Activated naive CD8-positive, alpha-beta T cell treated with anti-CD3 and anti-CD28 coated beads, Interleukin-2, amount 10 ng/mL, durations not matched to agents 7 days and 5 days (primary cell): ENCODE measurements at regions of chr3 and their contacts with region 1.

Region 1: DNA sequence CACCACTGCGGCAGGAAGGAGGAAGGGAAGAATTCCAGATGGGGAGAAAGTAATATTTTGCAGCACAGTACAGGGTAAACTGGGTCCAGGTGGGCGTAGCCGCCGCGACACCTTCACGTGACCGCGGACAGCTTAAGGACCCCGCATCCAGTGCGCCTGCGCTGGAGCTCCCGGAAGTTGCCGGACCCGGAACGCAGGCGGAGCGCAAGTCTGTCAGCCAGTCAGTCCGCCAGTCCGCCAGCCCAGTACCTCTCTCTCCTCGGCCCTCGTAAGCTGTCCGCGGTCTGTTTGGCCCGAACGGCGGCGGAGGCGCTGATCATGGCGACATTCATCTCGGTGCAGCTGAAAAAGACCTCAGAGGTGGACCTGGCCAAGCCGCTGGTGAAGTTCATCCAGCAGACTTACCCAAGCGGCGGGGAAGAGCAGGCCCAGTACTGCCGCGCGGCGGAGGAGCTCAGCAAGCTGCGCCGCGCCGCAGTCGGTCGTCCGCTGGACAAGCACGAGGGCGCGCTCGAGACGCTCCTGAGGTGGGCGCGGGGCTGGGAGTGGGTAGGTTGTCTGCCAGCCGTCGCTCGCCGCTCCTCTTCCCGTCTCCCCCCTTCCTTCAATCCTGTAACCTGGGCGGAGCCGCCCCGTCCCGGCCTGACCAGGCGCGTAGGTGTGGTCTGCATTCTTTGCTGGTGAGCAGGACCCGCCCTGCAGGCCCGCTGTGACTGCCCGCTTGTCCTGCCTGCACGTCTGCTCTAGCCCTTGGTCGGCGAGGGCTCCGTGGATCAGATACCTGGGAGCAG is at the start of gene PDCD6IP:
- DNase-seq: peak; percentile 92
- ATAC-seq: peak; percentile 84
- H3K4me3 Mint-ChIP-seq: peak within 1 kb of the TSS; percentile 93
- H3K27ac Mint-ChIP-seq: peak within 1 kb of the TSS; percentile 91
- H3K4me1 Mint-ChIP-seq: peaks cover 35% of the 10 kb centered on the region
- H3K27me3 Mint-ChIP-seq: peaks cover 2% of the 10 kb centered on the region
- total RNA-seq, gene PDCD6IP: 180 to 196 TPM

Region 2: DNA sequence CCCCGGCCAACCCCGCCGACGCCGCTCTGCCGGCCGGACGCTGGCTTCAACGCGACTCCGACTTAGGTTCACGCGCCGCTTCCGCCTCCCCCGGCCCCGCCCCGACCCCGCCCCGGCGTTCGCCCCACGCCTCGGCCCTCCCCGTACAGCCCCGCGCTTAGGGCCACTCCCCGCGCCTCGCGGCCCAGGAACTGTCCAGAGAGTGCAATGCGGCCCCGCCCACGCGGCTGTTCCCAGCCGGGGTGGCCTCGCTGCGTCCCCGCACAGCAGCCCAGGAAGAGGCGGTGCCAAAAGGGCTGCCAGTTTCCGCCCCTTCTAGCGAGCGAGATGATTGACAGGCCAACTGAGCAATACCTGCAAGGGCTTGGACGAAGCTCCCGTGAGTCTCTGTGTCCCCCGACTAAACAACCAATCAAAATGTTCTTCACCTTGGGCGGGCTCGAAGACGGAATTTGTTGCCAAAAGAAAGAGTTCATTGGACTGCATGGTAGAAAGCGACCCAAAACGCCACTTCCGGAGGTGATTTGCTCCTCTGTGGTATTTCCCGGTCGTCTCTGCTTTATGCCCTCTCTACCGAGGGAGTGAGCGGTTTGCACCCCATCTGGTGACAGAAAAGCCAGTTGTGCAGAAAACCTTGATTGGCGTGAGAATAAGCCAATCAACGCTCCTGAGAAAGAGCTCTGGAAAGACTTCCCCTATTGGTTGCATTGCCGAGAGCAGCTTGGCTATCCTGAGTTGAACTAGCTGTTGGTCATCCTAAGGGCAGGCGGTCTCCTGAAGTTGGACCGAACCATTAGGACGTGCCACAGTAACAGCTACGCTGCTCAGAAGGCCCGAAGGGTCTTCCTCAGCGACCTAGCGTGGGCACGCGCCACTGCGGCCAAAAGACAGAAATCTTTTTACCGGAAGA is 358.0 kb before region 1 on chr3 and contains the start of gene UBP1:
- POLR2A ChIA-PET with region 1: interaction called, 20 read pairs
- DNase-seq: peak; percentile 98
- ATAC-seq: peak; percentile 89
- H3K4me3 Mint-ChIP-seq: peak within 1 kb of the TSS; percentile 100
- H3K27ac Mint-ChIP-seq: peak within 1 kb of the TSS; percentile 100
- H3K4me1 Mint-ChIP-seq: peaks cover 36% of the 10 kb centered on the region
- H3K27me3 Mint-ChIP-seq: no peaks in the 10 kb centered on the region
- total RNA-seq, gene UBP1: 66.8 to 73.9 TPM

Region 3: GRCh38 chr3:33768578-33769330 is 29.9 kb before region 1 on chr3:
- POLR2A ChIA-PET with region 1: no interaction called
- DNase-seq: no peak
- ATAC-seq: no peak
- H3K4me3 Mint-ChIP-seq: no peak overlapping the region
- H3K27ac Mint-ChIP-seq: no peak overlapping the region
- H3K4me1 Mint-ChIP-seq: no peaks in the 10 kb centered on the region
- H3K27me3 Mint-ChIP-seq: peaks cover 13% of the 10 kb centered on the region